GM10248 (cell line): ENCODE measurements at regions of chr16 and their contacts with region 1.

Region 1: GRCh38 chr16:11255737-11256660 is at the start of gene SOCS1:
- DNase-seq: peak; percentile 89
- CTCF ChIP-seq: peak; percentile 92

Region 2: GRCh38 chr16:10964039-10964890 is 291.7 kb before region 1 on chr16:
- CTCF ChIA-PET with region 1: interaction called, 182 read pairs
- POLR2A ChIA-PET with region 1: interaction called, 45 read pairs
- DNase-seq: peak; percentile 75
- CTCF ChIP-seq: peak; percentile 95

Region 3: GRCh38 chr16:11076259-11077018 is 179.6 kb before region 1 on chr16:
- CTCF ChIA-PET with region 1: interaction called, 4 read pairs
- POLR2A ChIA-PET with region 1: interaction called, 13 read pairs
- DNase-seq: peak; percentile 89
- CTCF ChIP-seq: no peak

Region 4: GRCh38 chr16:11268921-11269375 is 12.9 kb after region 1 on chr16 and contains the start of gene TNP2:
- CTCF ChIA-PET with region 1: interaction called, 39 read pairs
- POLR2A ChIA-PET with region 1: interaction called, 7 read pairs
- DNase-seq: no peak
- CTCF ChIP-seq: no peak

Region 5: GRCh38 chr16:11312718-11313492 is 56.9 kb after region 1 on chr16:
- CTCF ChIA-PET with region 1: interaction called, 48 read pairs
- POLR2A ChIA-PET with region 1: interaction called, 52 read pairs
- DNase-seq: no peak
- CTCF ChIP-seq: no peak

Region 6: GRCh38 chr16:11370084-11370931 is 114.3 kb after region 1 on chr16:
- CTCF ChIA-PET with region 1: interaction called, 10 read pairs
- POLR2A ChIA-PET with region 1: interaction called, 3 read pairs
- DNase-seq: peak; percentile 46
- CTCF ChIP-seq: no peak